CD4-positive, alpha-beta memory T cell (primary cell): ENCODE measurements at regions of chr10 and their contacts with region 1.

Region 1: GRCh38 chr10:119542988-119543813 is 682 bp upstream of the RGS10 start:
- DNase-seq: peak; percentile 60 to 67 (median 64)
- H3K4me3 ChIP-seq: peak overlapping the region in 1 of 2 donors; percentile 88
- H3K4me3 Mint-ChIP-seq: peak overlapping the region; percentile 94 to 98 (median 95)
- H3K27ac ChIP-seq: peak overlapping the region; percentile 57
- H3K27ac Mint-ChIP-seq: peak overlapping the region; percentile 83 to 96 (median 91)
- H3K4me1 ChIP-seq: peaks cover 42% of the 10 kb centered on the region
- H3K4me1 Mint-ChIP-seq: peaks cover 28 to 43% (median 38%) of the 10 kb centered on the region in 4 donors
- H3K27me3 ChIP-seq: no peaks in the 10 kb centered on the region
- H3K27me3 Mint-ChIP-seq: no peaks in the 10 kb centered on the region

Region 2: DNA sequence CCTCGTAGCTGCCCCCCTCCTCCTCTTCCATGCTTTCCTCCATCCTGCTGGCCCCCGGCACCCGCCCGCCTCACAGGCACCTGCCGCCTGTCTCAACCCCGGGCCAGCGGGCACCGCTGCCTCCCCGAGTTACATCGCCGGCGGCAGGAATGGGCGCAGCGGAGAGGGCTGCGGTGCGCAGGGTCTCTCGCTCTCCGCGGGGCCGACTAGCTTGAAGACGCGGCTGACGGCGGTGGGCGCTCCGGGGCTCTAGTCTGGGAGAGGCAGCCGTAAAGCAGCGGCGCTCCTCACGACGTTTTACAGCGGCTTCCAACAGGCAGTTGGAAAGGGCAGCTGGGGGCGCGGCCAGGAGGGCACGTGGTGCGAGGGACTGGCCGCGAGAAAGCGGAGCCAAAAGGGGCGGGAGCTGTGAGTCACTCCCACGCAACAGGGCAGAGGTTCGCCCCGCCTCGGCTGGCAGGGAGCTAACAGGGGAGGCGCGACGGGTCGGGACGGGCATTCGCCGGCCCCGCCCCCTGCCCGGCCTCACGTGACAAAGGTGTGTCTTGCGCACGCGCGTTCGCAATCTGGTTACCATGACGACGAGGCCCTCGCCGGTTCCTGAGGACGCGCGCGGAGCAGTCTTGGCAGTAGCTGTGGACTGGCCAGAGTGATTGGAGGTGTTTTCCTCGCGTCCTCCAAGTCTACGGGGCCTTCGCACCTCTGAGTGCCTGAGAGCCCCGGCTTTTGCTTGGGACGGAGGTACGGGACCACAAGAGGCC is 788.3 kb before region 1 on chr10 and contains the start of gene CACUL1:
- CTCF ChIA-PET with region 1: no interaction called
- POLR2A ChIA-PET with region 1: interaction called, 4 read pairs
- intact Hi-C with region 1: loop called (anchors 5 kb)
- DNase-seq: peak; percentile 100
- H3K4me3 ChIP-seq: peak within 1 kb of the TSS; percentile 64 to 74
- H3K4me3 Mint-ChIP-seq: peak within 1 kb of the TSS; percentile 92 to 96 (median 94)
- H3K27ac ChIP-seq: peak within 1 kb of the TSS; percentile 87
- H3K27ac Mint-ChIP-seq: peak within 1 kb of the TSS; percentile 90 to 97 (median 96)
- H3K4me1 ChIP-seq: peaks cover 43% of the 10 kb centered on the region
- H3K4me1 Mint-ChIP-seq: peaks cover 22 to 49% (median 34%) of the 10 kb centered on the region in 4 donors
- H3K27me3 ChIP-seq: no peaks in the 10 kb centered on the region
- H3K27me3 Mint-ChIP-seq: peaks cover 0 to 9% of the 10 kb centered on the region in 2 donors
- total RNA-seq, gene CACUL1: 32.1 to 32.3 TPM

Region 3: GRCh38 chr10:119207367-119207668 is 335.9 kb before region 1 on chr10 and contains the start of gene GRK5:
- CTCF ChIA-PET with region 1: interaction called, 22 read pairs
- POLR2A ChIA-PET with region 1: interaction called, 48 read pairs
- intact Hi-C with region 1: loop called (anchors 1 kb)
- DNase-seq: peak; percentile 98 to 99 (median 98)
- H3K4me3 ChIP-seq: peak within 1 kb of the TSS; percentile 37 to 84
- H3K4me3 Mint-ChIP-seq: peak within 1 kb of the TSS; percentile 94 to 99 (median 96)
- H3K27ac ChIP-seq: peak within 1 kb of the TSS; percentile 84
- H3K27ac Mint-ChIP-seq: peak within 1 kb of the TSS; percentile 96 to 99 (median 97)
- H3K4me1 ChIP-seq: peaks cover 52% of the 10 kb centered on the region
- H3K4me1 Mint-ChIP-seq: peaks cover 33 to 53% (median 43%) of the 10 kb centered on the region in 4 donors
- H3K27me3 ChIP-seq: no peaks in the 10 kb centered on the region
- H3K27me3 Mint-ChIP-seq: no peaks in the 10 kb centered on the region
- total RNA-seq, gene GRK5: 26.7 to 27.9 TPM

Region 4: DNA sequence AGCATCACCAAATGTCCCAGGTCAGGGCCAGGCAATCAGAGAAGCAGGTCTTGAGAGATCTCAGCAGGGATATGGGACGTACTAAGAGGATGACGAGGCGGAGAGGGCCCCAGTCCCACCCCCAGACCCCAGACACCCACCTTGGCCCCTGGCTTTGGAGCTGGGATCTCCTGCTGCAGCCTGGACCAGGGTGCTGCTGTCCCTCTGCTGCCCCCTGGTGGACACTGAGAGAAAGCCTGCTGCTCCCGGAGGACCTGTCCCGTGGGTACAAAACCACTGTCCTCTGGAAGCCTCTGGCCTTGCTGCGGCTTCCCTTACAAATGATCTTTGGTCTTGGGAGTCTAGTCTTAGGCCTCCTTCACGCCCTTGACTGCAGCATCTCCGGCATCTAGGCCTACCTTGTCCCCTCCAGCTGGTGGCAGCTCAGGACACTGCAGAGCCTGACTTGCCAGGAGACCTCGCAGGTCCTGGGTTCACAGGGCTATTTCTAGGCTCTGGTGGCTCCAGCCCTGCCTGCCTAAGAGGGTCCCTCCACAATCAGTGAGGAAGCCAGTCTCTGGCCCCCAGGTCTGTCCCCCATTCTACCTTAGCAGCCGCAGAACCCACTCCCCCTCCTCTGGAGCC is 97.8 kb before region 1 on chr10:
- CTCF ChIA-PET with region 1: interaction called, 48 read pairs
- POLR2A ChIA-PET with region 1: interaction called, 21 read pairs
- intact Hi-C with region 1: loop called (anchors 1 kb)
- DNase-seq: peak; percentile 72 to 79 (median 76)
- H3K4me3 ChIP-seq: no peak overlapping the region
- H3K4me3 Mint-ChIP-seq: peak overlapping the region in 1 of 8 donors; percentile 22
- H3K27ac ChIP-seq: no peak overlapping the region
- H3K27ac Mint-ChIP-seq: peak overlapping the region in 3 of 7 donors; percentile 43 to 65 (median 48)
- H3K4me1 ChIP-seq: peaks cover 6% of the 10 kb centered on the region
- H3K4me1 Mint-ChIP-seq: peaks cover 1 to 13% (median 8%) of the 10 kb centered on the region in 4 donors
- H3K27me3 ChIP-seq: no peaks in the 10 kb centered on the region
- H3K27me3 Mint-ChIP-seq: no peaks in the 10 kb centered on the region

Region 5: GRCh38 chr10:119502209-119502608 is 41.0 kb before region 1 on chr10:
- CTCF ChIA-PET with region 1: interaction called, 39 read pairs
- POLR2A ChIA-PET with region 1: interaction called, 97 read pairs
- intact Hi-C with region 1: loop called (anchors 1 kb)
- DNase-seq: peak; percentile 83 to 94 (median 84)
- H3K4me3 ChIP-seq: peak overlapping the region; percentile 14 to 39
- H3K4me3 Mint-ChIP-seq: peak overlapping the region; percentile 68 to 89 (median 82)
- H3K27ac ChIP-seq: peak overlapping the region; percentile 79
- H3K27ac Mint-ChIP-seq: peak overlapping the region; percentile 95 to 99 (median 97)
- H3K4me1 ChIP-seq: peaks cover 74% of the 10 kb centered on the region
- H3K4me1 Mint-ChIP-seq: peaks cover 47 to 88% (median 73%) of the 10 kb centered on the region in 4 donors
- H3K27me3 ChIP-seq: no peaks in the 10 kb centered on the region
- H3K27me3 Mint-ChIP-seq: no peaks in the 10 kb centered on the region

Region 6: GRCh38 chr10:119650692-119651513 is 107.7 kb after region 1 on chr10 and contains the start of gene BAG3:
- CTCF ChIA-PET with region 1: interaction called, 9 read pairs
- POLR2A ChIA-PET with region 1: interaction called, 19 read pairs
- intact Hi-C with region 1: loop called (anchors 1 kb)
- DNase-seq: peak; percentile 66 to 80 (median 68)
- H3K4me3 ChIP-seq: peak within 1 kb of the TSS; percentile 88 to 89
- H3K4me3 Mint-ChIP-seq: peak within 1 kb of the TSS; percentile 94 to 100 (median 96)
- H3K27ac ChIP-seq: peak within 1 kb of the TSS; percentile 87
- H3K27ac Mint-ChIP-seq: peak within 1 kb of the TSS; percentile 96 to 99 (median 96)
- H3K4me1 ChIP-seq: peaks cover 45% of the 10 kb centered on the region
- H3K4me1 Mint-ChIP-seq: peaks cover 36 to 45% (median 43%) of the 10 kb centered on the region in 4 donors
- H3K27me3 ChIP-seq: no peaks in the 10 kb centered on the region
- H3K27me3 Mint-ChIP-seq: peaks cover 0 to under 1% of the 10 kb centered on the region in 2 donors
- total RNA-seq, gene BAG3: 20.8 to 21.6 TPM